PC-9 (cell line): ENCODE measurements at regions of chr16 and their contacts with region 1.

Region 1: DNA sequence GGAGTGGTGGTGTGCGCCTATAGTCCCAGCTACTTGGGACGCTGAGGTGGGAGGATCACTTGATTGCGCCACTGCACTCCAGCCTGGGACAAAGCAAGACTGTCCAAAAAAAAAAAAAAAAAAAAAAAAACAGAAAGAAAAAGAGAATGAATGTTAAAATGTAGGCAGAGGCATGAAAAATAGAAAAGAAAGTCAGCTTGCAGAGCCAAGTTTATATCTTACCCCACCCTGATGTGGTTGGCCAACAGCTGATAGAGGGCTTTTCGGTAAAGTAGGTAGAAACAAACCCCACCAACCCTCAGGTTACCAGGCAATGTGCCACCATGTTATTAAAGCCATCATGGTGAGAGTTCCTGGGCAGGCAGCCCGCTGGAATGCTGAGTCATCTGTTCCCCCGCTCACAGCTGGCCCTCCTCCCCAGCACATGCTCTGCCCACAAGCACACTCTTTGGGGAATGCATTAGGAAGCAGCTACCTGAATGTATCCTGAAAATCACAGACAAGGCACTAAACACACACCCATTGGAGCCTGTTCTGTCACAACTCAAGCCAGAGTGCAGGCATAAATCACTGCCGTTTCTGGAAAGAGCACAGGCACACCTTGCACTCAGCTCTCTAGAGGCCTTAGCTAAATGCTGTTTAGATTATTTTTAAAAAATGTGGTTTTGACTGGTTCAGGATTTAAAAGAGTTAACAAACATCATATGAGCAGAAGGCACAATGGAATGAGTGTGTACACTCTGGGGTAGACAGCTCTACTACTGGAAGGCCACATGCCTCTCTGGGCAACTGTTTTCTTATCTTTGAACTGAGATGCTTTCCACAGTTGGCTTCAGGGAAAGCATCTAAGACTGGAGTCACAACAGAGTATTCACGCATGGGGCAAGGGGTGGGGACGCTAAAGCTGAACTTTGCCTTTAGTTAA is 128.5 kb downstream of the PARN start:
- DNase-seq: peak; percentile 94
- H3K4me3 ChIP-seq: no peak overlapping the region
- H3K27ac ChIP-seq: peak overlapping the region; percentile 98
- H3K4me1 ChIP-seq: peaks cover 98% of the 10 kb centered on the region
- H3K27me3 ChIP-seq: no peaks in the 10 kb centered on the region
- CTCF ChIP-seq: no peak

Region 2: DNA sequence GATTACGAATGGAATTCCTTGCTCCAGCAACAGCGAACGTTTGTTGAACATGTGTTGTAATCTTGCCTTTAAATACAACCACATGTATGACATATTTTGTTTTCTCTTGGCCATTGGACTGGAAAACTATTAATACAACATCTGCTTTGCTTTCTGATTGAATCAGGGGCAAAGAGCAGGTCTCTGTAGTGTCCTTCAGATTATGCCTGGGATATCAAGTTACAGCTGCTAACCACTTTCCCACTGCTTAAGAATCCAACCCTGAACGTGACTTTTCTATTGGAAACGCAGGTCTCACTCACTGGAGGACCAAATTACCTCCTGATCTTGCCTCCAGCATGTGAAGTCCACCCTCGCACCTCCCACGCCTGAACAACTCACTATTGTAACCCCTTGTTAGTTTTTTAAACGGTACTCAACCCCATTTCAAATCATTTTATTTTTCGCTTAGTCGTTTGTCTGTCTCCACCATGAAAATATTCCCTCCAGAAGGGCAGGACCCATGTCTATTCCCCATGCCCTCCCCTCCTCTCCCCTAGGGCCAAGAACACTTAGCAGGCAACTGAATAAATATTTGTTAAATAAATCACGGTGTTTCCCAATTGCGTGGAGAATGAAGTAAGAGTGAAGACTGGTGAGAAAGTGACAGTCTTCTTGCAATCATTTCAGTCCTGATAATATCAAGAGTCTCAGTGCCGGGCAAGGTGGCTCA is 487.9 kb before region 1 on chr16:
- CTCF ChIA-PET with region 1: no interaction called
- POLR2A ChIA-PET with region 1: no interaction called
- intact Hi-C with region 1: no loop called
- DNase-seq: peak; percentile 17 to 95
- H3K4me3 ChIP-seq: peak overlapping the region; percentile 30; the same call in 1 of the 2 replicates
- H3K27ac ChIP-seq: peak overlapping the region; percentile 85
- H3K4me1 ChIP-seq: peaks cover 45% of the 10 kb centered on the region
- H3K27me3 ChIP-seq: no peaks in the 10 kb centered on the region
- CTCF ChIP-seq: no peak

Region 3: GRCh38 chr16:14285513-14286385 is 215.8 kb before region 1 on chr16:
- CTCF ChIA-PET with region 1: no interaction called
- POLR2A ChIA-PET with region 1: interaction called, 12 read pairs
- intact Hi-C with region 1: no loop called
- DNase-seq: peak; percentile 75 to 98
- H3K4me3 ChIP-seq: peak overlapping the region; percentile 75
- H3K27ac ChIP-seq: no peak overlapping the region
- H3K4me1 ChIP-seq: peaks cover 18% of the 10 kb centered on the region
- H3K27me3 ChIP-seq: no peaks in the 10 kb centered on the region
- CTCF ChIP-seq: no peak

Region 4: DNA sequence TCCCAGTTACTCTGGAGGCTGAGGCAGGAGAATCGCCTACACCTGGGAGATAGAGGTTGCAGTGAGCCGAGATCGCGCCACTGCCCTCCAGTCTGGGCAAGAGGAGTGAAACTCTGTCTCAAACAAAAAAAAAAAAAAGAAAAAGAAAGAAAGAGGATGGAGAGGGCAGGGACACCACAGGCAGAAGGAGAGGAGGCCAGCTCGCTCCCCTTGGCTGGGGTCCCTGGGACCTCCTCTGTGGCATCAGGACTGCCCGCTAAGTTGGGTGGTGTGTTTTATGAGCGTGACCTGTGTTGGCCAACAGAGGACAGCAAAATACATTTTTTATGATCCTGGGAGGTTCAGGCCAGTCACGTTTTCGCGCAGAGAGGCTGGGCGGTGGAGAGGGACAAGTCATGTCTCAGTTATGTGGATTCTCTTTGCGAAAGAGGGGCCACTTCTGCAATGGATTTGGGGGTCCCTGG is 200.9 kb before region 1 on chr16:
- CTCF ChIA-PET with region 1: no interaction called
- POLR2A ChIA-PET with region 1: interaction called, 4 read pairs
- intact Hi-C with region 1: loop called (anchors 1 kb)
- DNase-seq: peak; percentile 83 to 84
- H3K4me3 ChIP-seq: peak overlapping the region; percentile 73; the same call in 1 of the 2 replicates
- H3K27ac ChIP-seq: peak overlapping the region; percentile 83
- H3K4me1 ChIP-seq: peaks cover 8% of the 10 kb centered on the region
- H3K27me3 ChIP-seq: no peaks in the 10 kb centered on the region
- CTCF ChIP-seq: peak; percentile 68

Region 5: GRCh38 chr16:14310519-14310991 is 191.0 kb before region 1 on chr16:
- CTCF ChIA-PET with region 1: no interaction called
- POLR2A ChIA-PET with region 1: interaction called, 4 read pairs
- intact Hi-C with region 1: loop called (anchors 1 kb)
- DNase-seq: peak; percentile 52 to 64
- H3K4me3 ChIP-seq: peak overlapping the region; percentile 96; the same call in 1 of the 2 replicates
- H3K27ac ChIP-seq: peak overlapping the region; percentile 99
- H3K4me1 ChIP-seq: peaks cover 81% of the 10 kb centered on the region
- H3K27me3 ChIP-seq: no peaks in the 10 kb centered on the region
- CTCF ChIP-seq: peak; percentile 48; the same call in 1 of the 2 replicates

Region 6: GRCh38 chr16:14399378-14400284 is 102.0 kb before region 1 on chr16:
- CTCF ChIA-PET with region 1: no interaction called
- POLR2A ChIA-PET with region 1: interaction called, 4 read pairs
- intact Hi-C with region 1: loop called (anchors 1 kb)
- DNase-seq: peak; percentile 83 to 85
- H3K4me3 ChIP-seq: peak overlapping the region; percentile 45
- H3K27ac ChIP-seq: peak overlapping the region; percentile 92
- H3K4me1 ChIP-seq: peaks cover 51% of the 10 kb centered on the region
- H3K27me3 ChIP-seq: no peaks in the 10 kb centered on the region
- CTCF ChIP-seq: no peak

Region 7: DNA sequence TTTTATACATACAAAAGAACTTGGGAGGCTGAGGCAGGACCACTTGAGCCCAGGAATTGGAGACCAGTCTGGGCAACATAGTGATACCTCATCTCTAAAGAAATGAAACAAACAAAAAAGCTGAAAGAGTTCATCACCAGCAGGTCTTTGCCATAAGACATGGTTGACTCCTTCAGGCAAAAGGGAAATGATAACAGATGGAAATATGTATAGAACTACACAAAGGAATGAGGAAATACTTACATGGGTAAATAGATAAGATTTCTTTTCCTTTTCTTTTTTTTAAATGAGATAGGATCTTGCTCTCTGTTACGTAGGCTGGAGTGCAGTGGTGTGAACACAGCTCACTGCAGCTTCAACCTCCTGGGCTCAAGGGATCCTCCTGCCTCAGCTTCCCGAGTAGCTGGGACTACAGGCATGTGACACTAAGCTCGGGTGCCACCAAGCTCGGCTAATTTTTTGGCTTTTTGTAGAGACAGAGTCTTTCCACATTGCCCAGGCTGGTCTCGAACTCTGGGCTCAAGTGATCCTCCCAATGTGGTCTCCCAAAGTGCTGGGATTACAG is 36.7 kb before region 1 on chr16:
- CTCF ChIA-PET with region 1: no interaction called
- POLR2A ChIA-PET with region 1: interaction called, 28 read pairs
- intact Hi-C with region 1: no loop called
- DNase-seq: peak in 1 of 2 experiments; percentile 51
- H3K4me3 ChIP-seq: no peak overlapping the region
- H3K27ac ChIP-seq: no peak overlapping the region
- H3K4me1 ChIP-seq: 0 out of 2 replicates have a peak, but pooled peaks cover 5% of the 10 kb centered on the region
- H3K27me3 ChIP-seq: no peaks in the 10 kb centered on the region
- CTCF ChIP-seq: no peak

Region 8: GRCh38 chr16:14486520-14487303 is 14.9 kb before region 1 on chr16:
- CTCF ChIA-PET with region 1: interaction called, 3 read pairs
- POLR2A ChIA-PET with region 1: interaction called, 5 read pairs
- intact Hi-C with region 1: loop called (anchors 1 kb)
- DNase-seq: peak; percentile 79 to 89
- H3K4me3 ChIP-seq: peak overlapping the region; percentile 47; the same call in 1 of the 2 replicates
- H3K27ac ChIP-seq: peak overlapping the region; percentile 81
- H3K4me1 ChIP-seq: peaks cover 40% of the 10 kb centered on the region
- H3K27me3 ChIP-seq: no peaks in the 10 kb centered on the region
- CTCF ChIP-seq: no peak